Activated CD4-positive, alpha-beta memory T cell treated with anti-CD3 and anti-CD28 coated beads for 36 hours (primary cell): ENCODE measurements at regions of chr21 and their contacts with region 1.

Region 1: GRCh38 chr21:34745557-34746255 is 76.9 kb downstream of the CLIC6 start:
- DNase-seq: peak; percentile 72
- H3K4me3 Mint-ChIP-seq: peak overlapping the region; percentile 43
- H3K27ac Mint-ChIP-seq: no peak overlapping the region
- H3K4me1 Mint-ChIP-seq: peaks cover 5% of the 10 kb centered on the region
- H3K27me3 Mint-ChIP-seq: peaks cover 14% of the 10 kb centered on the region

Region 2: DNA sequence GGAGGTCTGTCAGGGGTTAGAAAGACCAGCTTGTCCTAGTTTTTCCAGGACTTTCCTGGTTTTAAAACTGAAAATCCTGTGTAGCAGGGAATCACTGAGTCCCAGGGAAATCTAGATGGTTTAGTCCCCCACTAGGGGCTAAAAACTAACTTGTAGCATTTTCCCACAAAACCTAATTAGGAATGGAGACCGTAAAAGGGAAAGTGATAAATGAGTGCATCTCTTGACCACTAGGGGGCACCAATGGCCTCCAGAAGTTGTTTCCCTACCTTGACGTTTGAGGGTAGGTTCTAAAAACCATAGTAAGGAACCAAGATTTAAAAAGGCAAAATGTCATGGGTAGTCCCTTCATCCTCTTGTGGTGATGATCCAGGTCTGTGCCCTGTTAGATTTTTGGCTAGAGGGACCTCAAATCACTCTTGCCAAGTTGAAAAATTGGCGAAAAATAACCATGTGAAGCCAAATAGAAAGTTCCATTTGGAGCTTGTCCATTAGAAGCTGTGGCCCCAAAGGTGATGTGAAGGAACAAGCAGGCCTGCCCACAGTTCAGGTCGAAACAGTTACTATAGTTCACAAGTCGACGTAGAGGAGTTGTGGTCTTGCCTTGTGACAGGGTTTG is 52.4 kb before region 1 on chr21:
- CTCF ChIA-PET with region 1: interaction called, 23 read pairs
- POLR2A ChIA-PET with region 1: no interaction called
- intact Hi-C with region 1: no loop called
- DNase-seq: peak; percentile 54
- H3K4me3 Mint-ChIP-seq: no peak overlapping the region
- H3K27ac Mint-ChIP-seq: no peak overlapping the region
- H3K4me1 Mint-ChIP-seq: peaks cover 4% of the 10 kb centered on the region
- H3K27me3 Mint-ChIP-seq: peaks cover 39% of the 10 kb centered on the region

Region 3: DNA sequence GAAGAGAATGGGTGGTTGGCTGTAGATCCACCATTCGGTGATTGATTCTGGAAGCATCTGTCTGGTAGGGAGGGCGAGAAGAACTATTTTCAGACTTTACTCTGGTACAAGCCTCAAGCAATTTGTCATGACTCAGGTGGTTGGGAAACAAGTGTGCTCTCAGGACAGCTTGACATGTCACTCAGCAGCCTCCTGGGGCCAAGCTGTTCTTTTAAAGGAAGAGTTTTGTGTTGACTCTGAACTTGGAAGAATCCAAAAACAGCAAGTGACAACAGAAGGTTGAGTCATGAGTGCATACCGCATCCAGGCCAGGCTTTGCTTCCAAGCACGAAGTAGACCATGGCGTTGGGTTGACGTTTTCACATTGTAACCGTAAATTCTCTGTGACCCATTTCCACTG is 11.0 kb before region 1 on chr21:
- CTCF ChIA-PET with region 1: interaction called, 13 read pairs
- POLR2A ChIA-PET with region 1: no interaction called
- intact Hi-C with region 1: no loop called
- DNase-seq: no peak
- H3K4me3 Mint-ChIP-seq: no peak overlapping the region
- H3K27ac Mint-ChIP-seq: no peak overlapping the region
- H3K4me1 Mint-ChIP-seq: no peaks in the 10 kb centered on the region
- H3K27me3 Mint-ChIP-seq: peaks cover 9% of the 10 kb centered on the region

Region 4: GRCh38 chr21:35198031-35198431 is 452.3 kb after region 1 on chr21:
- CTCF ChIA-PET with region 1: no interaction called
- POLR2A ChIA-PET with region 1: no interaction called
- intact Hi-C with region 1: no loop called
- DNase-seq: no peak
- H3K4me3 Mint-ChIP-seq: no peak overlapping the region
- H3K27ac Mint-ChIP-seq: no peak overlapping the region
- H3K4me1 Mint-ChIP-seq: peaks cover 28% of the 10 kb centered on the region
- H3K27me3 Mint-ChIP-seq: peaks cover 2% of the 10 kb centered on the region

Region 5: DNA sequence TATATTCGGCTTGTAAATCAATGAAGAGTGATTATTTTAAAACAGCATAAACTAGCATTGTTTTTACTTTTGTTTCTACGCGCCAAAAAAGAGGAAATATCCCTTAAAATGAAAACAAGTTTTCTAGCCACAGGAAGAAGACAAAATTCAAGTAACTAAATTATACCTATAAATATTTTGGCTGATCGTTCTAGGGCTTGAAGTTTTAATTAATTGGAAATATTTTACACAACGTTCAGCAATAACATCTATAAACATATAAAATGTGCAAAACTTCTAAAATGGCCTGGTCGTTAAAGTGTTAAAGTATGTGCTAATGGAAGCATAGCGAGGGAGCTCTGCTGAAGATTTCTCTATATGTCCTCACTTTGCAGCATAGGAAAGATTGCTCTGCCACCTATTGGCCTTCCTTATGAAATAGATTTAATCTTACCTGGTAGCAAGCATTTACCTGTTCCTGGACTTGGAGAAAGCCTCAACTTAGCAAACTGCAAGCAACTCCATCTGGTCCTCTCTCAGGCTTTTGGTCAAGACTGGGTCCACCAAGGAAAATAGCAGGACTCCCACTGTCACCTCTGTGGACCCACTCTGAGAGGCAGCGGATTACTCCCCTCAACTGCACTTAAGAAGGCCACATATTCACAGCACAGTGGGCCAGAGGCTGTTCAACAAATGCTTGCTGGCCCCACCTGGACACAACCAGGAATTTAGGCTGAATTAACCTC is 654.7 kb after region 1 on chr21:
- CTCF ChIA-PET with region 1: interaction called, 48 read pairs
- POLR2A ChIA-PET with region 1: no interaction called
- intact Hi-C with region 1: loop called (anchors 1 kb)
- DNase-seq: peak; percentile 37
- H3K4me3 Mint-ChIP-seq: no peak overlapping the region
- H3K27ac Mint-ChIP-seq: no peak overlapping the region
- H3K4me1 Mint-ChIP-seq: peaks cover 24% of the 10 kb centered on the region
- H3K27me3 Mint-ChIP-seq: peaks cover 3% of the 10 kb centered on the region

Region 6: GRCh38 chr21:35616090-35616489 is 870.4 kb after region 1 on chr21:
- CTCF ChIA-PET with region 1: interaction called, 3 read pairs
- POLR2A ChIA-PET with region 1: no interaction called
- intact Hi-C with region 1: loop called (anchors 10 kb)
- DNase-seq: no peak
- H3K4me3 Mint-ChIP-seq: no peak overlapping the region
- H3K27ac Mint-ChIP-seq: no peak overlapping the region
- H3K4me1 Mint-ChIP-seq: no peaks in the 10 kb centered on the region
- H3K27me3 Mint-ChIP-seq: peaks cover 12% of the 10 kb centered on the region

Region 7: GRCh38 chr21:35664683-35665082 is 919.0 kb after region 1 on chr21:
- CTCF ChIA-PET with region 1: no interaction called
- POLR2A ChIA-PET with region 1: no interaction called
- intact Hi-C with region 1: no loop called
- DNase-seq: peak; percentile 38
- H3K4me3 Mint-ChIP-seq: no peak overlapping the region
- H3K27ac Mint-ChIP-seq: no peak overlapping the region
- H3K4me1 Mint-ChIP-seq: no peaks in the 10 kb centered on the region
- H3K27me3 Mint-ChIP-seq: peaks cover 18% of the 10 kb centered on the region

Region 8: DNA sequence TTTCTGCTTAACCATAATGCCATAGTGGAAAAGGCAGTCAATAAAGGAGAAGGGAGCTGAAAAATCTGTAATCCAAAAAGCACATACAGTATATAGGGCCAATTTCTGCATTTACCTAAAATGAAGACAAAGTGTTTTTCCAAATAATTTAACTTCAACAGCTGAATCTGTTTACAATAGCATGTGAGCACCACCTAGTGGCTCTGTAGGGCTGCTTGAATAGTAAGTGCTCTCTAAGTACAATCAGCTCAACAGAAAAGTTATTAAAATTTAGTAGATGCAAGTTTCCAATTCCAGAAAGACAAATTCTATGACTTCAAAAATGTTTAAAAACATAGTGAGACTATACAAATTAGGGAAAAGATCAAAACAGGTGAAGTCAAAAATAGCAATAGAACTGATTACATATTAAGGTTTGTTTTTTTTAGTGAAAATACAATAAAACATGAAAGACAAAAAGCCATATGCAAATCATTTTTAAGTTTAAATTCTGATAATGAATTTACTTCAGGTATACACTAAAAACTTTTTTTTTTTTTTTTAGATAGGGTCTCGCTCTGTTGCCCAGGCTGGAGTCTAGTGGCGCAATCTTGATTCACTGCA is 1094.6 kb after region 1 on chr21:
- CTCF ChIA-PET with region 1: interaction called, 46 read pairs
- POLR2A ChIA-PET with region 1: no interaction called
- intact Hi-C with region 1: loop called (anchors 1 kb)
- DNase-seq: peak; percentile 51
- H3K4me3 Mint-ChIP-seq: no peak overlapping the region
- H3K27ac Mint-ChIP-seq: no peak overlapping the region
- H3K4me1 Mint-ChIP-seq: no peaks in the 10 kb centered on the region
- H3K27me3 Mint-ChIP-seq: peaks cover 1% of the 10 kb centered on the region

Region 9: GRCh38 chr21:36028127-36029069 is 1282.7 kb after region 1 on chr21:
- CTCF ChIA-PET with region 1: interaction called, 19 read pairs
- POLR2A ChIA-PET with region 1: no interaction called
- intact Hi-C with region 1: no loop called
- DNase-seq: peak; percentile 77
- H3K4me3 Mint-ChIP-seq: no peak overlapping the region
- H3K27ac Mint-ChIP-seq: no peak overlapping the region
- H3K4me1 Mint-ChIP-seq: peaks cover 4% of the 10 kb centered on the region
- H3K27me3 Mint-ChIP-seq: no peaks in the 10 kb centered on the region